CD14-positive monocyte (primary cell): ENCODE measurements at regions of chr11 and their contacts with region 1.

Region 1: DNA sequence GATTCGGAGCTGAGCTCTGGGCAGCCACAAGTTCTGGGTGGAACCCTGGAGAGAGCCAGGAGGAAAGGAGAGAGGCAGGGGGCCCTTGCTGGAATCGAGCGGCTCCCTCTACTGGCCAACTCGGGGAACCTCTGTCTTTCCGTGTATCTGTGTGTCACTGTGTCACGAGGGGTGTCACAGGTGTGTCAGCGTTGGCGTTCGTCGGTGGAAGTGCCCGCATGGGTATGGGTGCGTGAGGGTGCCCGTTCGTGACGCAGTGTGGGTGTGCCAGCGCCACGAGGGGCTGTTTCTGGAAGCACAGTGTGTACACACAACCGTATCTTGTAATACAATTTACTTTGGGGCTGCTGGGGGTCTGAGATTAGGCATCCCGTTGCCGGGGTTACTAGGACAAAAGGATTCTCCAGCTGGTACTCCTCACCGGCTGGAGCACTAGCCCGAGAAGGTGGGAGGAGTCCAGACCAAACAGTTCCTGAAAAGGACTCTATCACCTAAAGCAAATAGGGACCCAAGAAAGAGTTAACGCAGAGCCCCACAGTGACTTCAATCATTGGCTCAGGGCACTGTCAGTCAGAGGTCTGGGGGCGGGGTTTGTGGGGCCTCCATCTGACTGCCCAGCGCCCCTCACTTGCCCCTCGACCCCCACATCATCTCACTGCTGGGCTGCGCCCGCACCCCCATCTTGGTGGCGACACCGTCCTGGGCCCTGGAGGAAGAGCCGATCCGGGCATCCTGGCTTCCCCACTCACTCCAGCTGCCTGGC is 2.6 kb upstream of the BCL9L start:
- DNase-seq: peak; percentile 85 to 97 (median 85)
- H3K4me3 ChIP-seq: peak overlapping the region; percentile 78 to 91 (median 84)
- H3K4me3 Mint-ChIP-seq: peak overlapping the region; percentile 92 to 98
- H3K27ac ChIP-seq: peak overlapping the region; percentile 86 to 87
- H3K27ac Mint-ChIP-seq: peak overlapping the region; percentile 92 to 98 (median 96)
- H3K4me1 ChIP-seq: peaks cover 55 to 69% of the 10 kb centered on the region in 2 donors
- H3K4me1 Mint-ChIP-seq: peaks cover 50% of the 10 kb centered on the region
- H3K27me3 ChIP-seq: no peaks in the 10 kb centered on the region
- H3K27me3 Mint-ChIP-seq: peaks cover 0 to 15% (median 3%) of the 10 kb centered on the region in 3 donors
- CTCF ChIP-seq: peak; percentile 93

Region 2: GRCh38 chr11:118689851-118690552 is 238.3 kb before region 1 on chr11:
- intact Hi-C with region 1: loop called in 1 of 2 experiments (anchors 10 kb)
- DNase-seq: peak; percentile 84 to 85 (median 84)
- H3K4me3 ChIP-seq: peak overlapping the region; percentile 19 to 78 (median 42)
- H3K4me3 Mint-ChIP-seq: peak overlapping the region; percentile 81 to 89
- H3K27ac ChIP-seq: peak overlapping the region; percentile 34 to 67
- H3K27ac Mint-ChIP-seq: peak overlapping the region; percentile 60 to 91 (median 85)
- H3K4me1 ChIP-seq: peaks cover 27 to 36% of the 10 kb centered on the region in 2 donors
- H3K4me1 Mint-ChIP-seq: peaks cover 29% of the 10 kb centered on the region
- H3K27me3 ChIP-seq: no peaks in the 10 kb centered on the region
- H3K27me3 Mint-ChIP-seq: peaks cover 12 to 35% (median 17%) of the 10 kb centered on the region in 3 donors
- CTCF ChIP-seq: peak; percentile 97

Region 3: GRCh38 chr11:118895142-118896039 is 32.9 kb before region 1 on chr11:
- intact Hi-C with region 1: loop called in 1 of 2 experiments (anchors 5 kb)
- DNase-seq: no peak
- H3K4me3 ChIP-seq: no peak overlapping the region
- H3K4me3 Mint-ChIP-seq: no peak overlapping the region
- H3K27ac ChIP-seq: no peak overlapping the region
- H3K27ac Mint-ChIP-seq: peak overlapping the region in 3 of 7 donors; percentile 14 to 66 (median 64)
- H3K4me1 ChIP-seq: peaks cover 14 to 15% of the 10 kb centered on the region in 2 donors
- H3K4me1 Mint-ChIP-seq: peaks cover 23% of the 10 kb centered on the region
- H3K27me3 ChIP-seq: no peaks in the 10 kb centered on the region
- H3K27me3 Mint-ChIP-seq: peaks cover 3 to 10% (median 9%) of the 10 kb centered on the region in 3 donors
- CTCF ChIP-seq: no peak

Region 4: DNA sequence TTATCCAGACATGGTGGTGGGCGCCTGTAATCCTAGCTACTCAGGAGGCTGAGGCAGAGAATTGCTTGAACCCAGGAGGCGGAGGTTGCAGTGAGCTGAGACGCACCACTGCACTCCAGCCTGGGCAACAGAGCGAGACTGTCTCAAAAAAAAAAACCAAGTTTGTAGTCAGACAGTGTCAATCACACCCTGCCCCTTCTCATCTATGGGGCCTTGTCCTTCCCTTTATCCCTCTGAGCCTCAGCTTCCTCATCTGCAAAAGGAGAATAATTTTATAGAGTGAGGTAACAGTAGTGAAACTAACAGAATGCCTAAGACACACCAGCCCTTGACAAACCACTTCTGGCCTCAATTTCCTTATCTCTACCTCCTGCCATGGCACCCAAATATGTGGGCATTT is 13.3 kb before region 1 on chr11:
- intact Hi-C with region 1: loop called in 1 of 2 experiments (anchors 1 kb)
- DNase-seq: peak; percentile 59 to 75 (median 72)
- H3K4me3 ChIP-seq: peak overlapping the region in 1 of 3 experiments; percentile 41
- H3K4me3 Mint-ChIP-seq: peak overlapping the region; percentile 48 to 64
- H3K27ac ChIP-seq: peak overlapping the region; percentile 79 to 80
- H3K27ac Mint-ChIP-seq: peak overlapping the region; percentile 71 to 92 (median 88)
- H3K4me1 ChIP-seq: peaks cover 95 to 100% of the 10 kb centered on the region in 2 donors
- H3K4me1 Mint-ChIP-seq: peaks cover 89% of the 10 kb centered on the region
- H3K27me3 ChIP-seq: no peaks in the 10 kb centered on the region
- H3K27me3 Mint-ChIP-seq: peaks cover 6 to 32% (median 15%) of the 10 kb centered on the region in 3 donors
- CTCF ChIP-seq: no peak

Region 5: DNA sequence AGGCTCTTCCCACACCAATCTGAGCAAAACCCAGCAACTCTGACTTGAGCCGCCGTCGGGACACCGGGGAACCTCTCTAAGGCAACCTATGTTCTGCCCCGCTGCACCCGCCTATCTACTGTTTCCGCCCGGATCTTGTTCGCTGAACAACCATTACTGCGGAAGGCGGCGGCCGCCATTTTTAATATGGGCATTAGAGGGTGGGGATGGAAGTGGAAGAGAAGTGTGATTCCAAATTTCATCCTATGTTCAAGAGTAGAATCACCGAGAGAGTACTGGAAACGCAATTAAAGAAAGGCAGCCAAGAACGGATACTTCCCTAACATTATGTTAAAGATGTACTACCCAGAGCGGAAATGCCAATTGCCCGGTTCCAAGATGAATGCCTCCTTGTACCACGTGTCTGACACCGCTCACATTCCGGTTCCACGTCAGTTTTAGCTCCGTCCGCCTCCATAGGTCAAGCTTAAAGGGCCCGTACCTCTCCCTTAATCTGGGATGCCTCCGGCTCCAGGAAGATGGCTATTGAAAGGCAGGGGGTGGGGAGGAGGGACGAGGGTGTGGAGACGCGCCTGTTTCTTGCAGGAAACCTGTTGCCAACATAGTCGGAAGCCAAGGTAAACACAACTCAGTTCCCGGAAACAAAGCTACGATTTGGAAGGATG is 173.6 kb after region 1 on chr11 and contains the start of gene DPAGT1:
- intact Hi-C with region 1: loop called in 1 of 2 experiments (anchors 5 kb)
- DNase-seq: peak; percentile 82 to 86 (median 85)
- H3K4me3 ChIP-seq: peak within 1 kb of the TSS; percentile 80 to 91 (median 87)
- H3K4me3 Mint-ChIP-seq: peak within 1 kb of the TSS; percentile 90 to 98
- H3K27ac ChIP-seq: peak within 1 kb of the TSS; percentile 76 to 91
- H3K27ac Mint-ChIP-seq: peak within 1 kb of the TSS; percentile 96 to 99 (median 99)
- H3K4me1 ChIP-seq: peaks cover 44 to 56% of the 10 kb centered on the region in 2 donors
- H3K4me1 Mint-ChIP-seq: peaks cover 52% of the 10 kb centered on the region
- H3K27me3 ChIP-seq: no peaks in the 10 kb centered on the region
- H3K27me3 Mint-ChIP-seq: no peaks in the 10 kb centered on the region
- CTCF ChIP-seq: no peak
- polyA plus RNA-seq, gene DPAGT1: 37.0 to 54.2 (median 39.7) TPM